CD14-positive monocyte (primary cell): ENCODE measurements at regions of chr20 and their contacts with region 1.

Region 1: GRCh38 chr20:59006864-59007664 is at the start of gene CTSZ:
- DNase-seq: peak; percentile 50 to 69 (median 60)
- H3K4me3 ChIP-seq: peak within 1 kb of the TSS; percentile 86 to 99 (median 90)
- H3K4me3 Mint-ChIP-seq: peak within 1 kb of the TSS; percentile 92 to 96
- H3K27ac ChIP-seq: peak within 1 kb of the TSS; percentile 98
- H3K27ac Mint-ChIP-seq: peak within 1 kb of the TSS; percentile 98 to 100 (median 99)
- H3K4me1 ChIP-seq: peaks cover 59 to 72% of the 10 kb centered on the region in 2 donors
- H3K4me1 Mint-ChIP-seq: peaks cover 61% of the 10 kb centered on the region
- H3K27me3 ChIP-seq: no peaks in the 10 kb centered on the region
- H3K27me3 Mint-ChIP-seq: peaks cover 0 to 6% (median 2%) of the 10 kb centered on the region in 3 donors
- CTCF ChIP-seq: no peak
- polyA plus RNA-seq, gene CTSZ: 62.6 to 755 (median 86.4) TPM

Region 2: GRCh38 chr20:58888521-58889333 is 118.3 kb before region 1 on chr20:
- intact Hi-C with region 1: loop called (anchors 5 to 10 kb)
- DNase-seq: peak; percentile 75 to 85 (median 76)
- H3K4me3 ChIP-seq: peak overlapping the region; percentile 77 to 94 (median 88)
- H3K4me3 Mint-ChIP-seq: peak overlapping the region; percentile 77 to 82
- H3K27ac ChIP-seq: peak overlapping the region in 1 of 2 donors; percentile 59
- H3K27ac Mint-ChIP-seq: peak overlapping the region in 4 of 7 donors; percentile 32 to 75 (median 58)
- H3K4me1 ChIP-seq: peaks cover 13 to 28% of the 10 kb centered on the region in 2 donors
- H3K4me1 Mint-ChIP-seq: peaks cover 15% of the 10 kb centered on the region
- H3K27me3 ChIP-seq: no peaks in the 10 kb centered on the region
- H3K27me3 Mint-ChIP-seq: peaks cover 2 to 7% (median 3%) of the 10 kb centered on the region in 3 donors
- CTCF ChIP-seq: no peak

Region 3: DNA sequence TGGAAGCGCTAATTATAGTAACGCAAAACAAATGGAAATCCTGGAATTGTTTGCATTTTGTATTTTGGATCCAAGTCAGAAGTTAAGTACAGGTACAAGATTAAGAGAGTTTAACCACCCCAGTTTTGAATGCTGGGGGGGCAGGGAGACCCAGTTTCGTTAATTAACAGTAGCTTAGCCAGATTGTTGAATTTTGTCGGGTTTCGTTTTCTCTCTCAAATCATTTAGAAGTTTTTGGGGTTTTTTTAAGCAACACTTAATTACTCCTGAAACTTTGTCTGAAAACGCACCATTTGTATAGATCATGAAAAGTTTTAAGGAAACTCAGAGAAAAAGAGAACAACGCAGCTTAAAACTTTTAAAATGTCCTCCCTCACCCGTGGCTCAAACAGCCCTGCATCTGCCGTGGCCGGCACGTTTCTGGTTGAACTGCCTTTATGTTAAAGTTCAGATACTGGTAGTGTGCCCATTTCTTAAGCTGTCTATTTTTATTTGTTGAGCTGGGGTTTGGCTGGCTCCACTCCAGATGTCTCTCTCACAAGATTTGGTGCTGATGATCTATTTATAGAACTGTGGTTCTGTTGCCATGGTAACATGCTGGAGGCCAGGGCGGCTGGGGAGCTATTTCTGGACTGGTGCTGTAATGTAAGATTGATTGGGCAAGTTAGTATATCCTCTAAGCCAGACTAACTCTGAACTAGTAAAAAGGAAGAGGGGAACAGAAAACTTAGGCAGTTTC is 99.5 kb before region 1 on chr20:
- intact Hi-C with region 1: loop called in 1 of 2 experiments (anchors 5 kb)
- DNase-seq: peak; percentile 90 to 97 (median 93)
- H3K4me3 ChIP-seq: peak overlapping the region; percentile 36 to 76 (median 65)
- H3K4me3 Mint-ChIP-seq: peak overlapping the region; percentile 88 to 96
- H3K27ac ChIP-seq: peak overlapping the region; percentile 89 to 91
- H3K27ac Mint-ChIP-seq: peak overlapping the region; percentile 96 to 100 (median 99)
- H3K4me1 ChIP-seq: peaks cover 28 to 32% of the 10 kb centered on the region in 2 donors
- H3K4me1 Mint-ChIP-seq: peaks cover 40% of the 10 kb centered on the region
- H3K27me3 ChIP-seq: no peaks in the 10 kb centered on the region
- H3K27me3 Mint-ChIP-seq: peaks cover 0 to 3% (median 0%) of the 10 kb centered on the region in 3 donors
- CTCF ChIP-seq: no peak

Region 4: DNA sequence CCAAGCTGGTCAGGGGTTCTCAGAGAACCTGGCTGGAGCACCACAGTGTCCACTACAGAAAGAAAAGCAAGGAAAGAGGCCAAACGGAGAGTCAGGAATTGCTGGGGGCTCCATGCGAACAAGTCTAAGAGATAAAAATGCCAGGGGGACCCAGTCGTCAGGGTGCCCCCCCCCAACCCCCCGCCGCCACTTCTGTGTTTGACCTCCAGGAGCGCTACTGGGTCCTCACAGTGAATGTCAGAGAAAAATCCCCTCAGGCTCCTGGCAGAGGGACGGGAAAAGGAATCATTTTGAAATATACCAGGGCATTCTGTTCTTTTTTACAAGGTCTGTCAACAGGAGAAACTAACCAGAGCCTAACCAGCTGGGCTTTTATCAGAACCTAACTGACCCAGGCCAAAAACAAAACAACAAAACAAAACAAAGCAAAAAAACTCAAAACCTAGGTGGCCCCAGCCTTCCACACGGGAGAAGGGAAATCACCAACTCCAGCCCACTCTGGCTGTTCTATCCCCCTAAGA is 43.9 kb before region 1 on chr20:
- intact Hi-C with region 1: no loop called
- DNase-seq: no peak
- H3K4me3 ChIP-seq: no peak overlapping the region
- H3K4me3 Mint-ChIP-seq: no peak overlapping the region
- H3K27ac ChIP-seq: no peak overlapping the region
- H3K27ac Mint-ChIP-seq: no peak overlapping the region
- H3K4me1 ChIP-seq: no peaks in the 10 kb centered on the region
- H3K4me1 Mint-ChIP-seq: peaks cover 5% of the 10 kb centered on the region
- H3K27me3 ChIP-seq: no peaks in the 10 kb centered on the region
- H3K27me3 Mint-ChIP-seq: peaks cover 7 to 19% (median 17%) of the 10 kb centered on the region in 3 donors
- CTCF ChIP-seq: no peak

Region 5: GRCh38 chr20:59032023-59032712 is 25.1 kb after region 1 on chr20 and contains the start of gene ATP5F1E:
- intact Hi-C with region 1: loop called (anchors 2 kb)
- DNase-seq: peak; percentile 94 to 95 (median 94)
- H3K4me3 ChIP-seq: peak within 1 kb of the TSS; percentile 53 to 83 (median 79)
- H3K4me3 Mint-ChIP-seq: peak within 1 kb of the TSS; percentile 94 to 97
- H3K27ac ChIP-seq: peak within 1 kb of the TSS; percentile 78 to 88
- H3K27ac Mint-ChIP-seq: peak within 1 kb of the TSS; percentile 94 to 99 (median 97)
- H3K4me1 ChIP-seq: peaks cover 23 to 41% of the 10 kb centered on the region in 2 donors
- H3K4me1 Mint-ChIP-seq: peaks cover 44% of the 10 kb centered on the region
- H3K27me3 ChIP-seq: no peaks in the 10 kb centered on the region
- H3K27me3 Mint-ChIP-seq: peaks cover 0 to 2% (median 0%) of the 10 kb centered on the region in 3 donors
- CTCF ChIP-seq: no peak
- polyA plus RNA-seq, gene ATP5F1E: 39.0 to 105 (median 102) TPM

Region 6: DNA sequence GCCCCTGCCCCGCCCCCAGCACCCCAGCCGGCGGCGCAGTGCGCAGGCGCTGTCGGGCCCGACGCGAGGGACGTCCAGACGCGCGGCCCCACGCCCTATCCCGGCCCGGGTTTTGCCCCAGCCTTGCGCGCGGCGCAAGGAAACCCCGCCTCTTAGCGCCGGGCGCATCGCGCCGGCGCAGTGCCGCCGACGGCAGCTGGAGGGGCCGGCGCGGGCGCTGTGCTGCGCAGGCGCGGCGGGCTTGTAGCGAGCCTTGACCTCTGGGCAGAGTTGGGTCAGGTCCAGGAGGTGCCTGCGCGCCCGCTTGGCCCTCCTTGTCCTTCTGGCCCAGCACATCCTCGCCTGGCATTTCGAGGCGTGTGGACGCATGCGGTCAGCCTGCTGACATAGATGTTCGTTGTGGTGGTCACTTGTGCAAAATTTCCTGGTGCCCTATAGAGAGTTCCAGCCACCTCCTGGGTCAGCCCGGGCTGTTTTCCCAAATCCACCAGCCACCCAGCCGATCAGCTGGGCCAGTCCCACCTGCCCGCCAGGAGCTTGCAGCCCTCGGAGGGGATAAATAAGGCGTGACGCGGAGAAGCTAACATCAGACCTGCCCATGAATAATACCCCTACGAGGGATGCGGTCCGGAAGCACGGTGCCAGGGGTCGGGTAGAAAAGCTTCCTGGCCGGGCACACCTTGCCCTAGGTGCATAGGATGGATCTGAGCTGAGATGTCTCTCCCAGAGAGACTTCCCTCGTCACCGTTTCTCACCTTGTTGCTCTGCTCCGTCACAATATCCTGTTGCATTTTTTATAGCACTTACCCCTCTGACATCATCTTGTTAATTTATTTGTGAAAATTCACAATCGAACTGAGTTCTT is 36.0 kb after region 1 on chr20:
- intact Hi-C with region 1: loop called in 1 of 2 experiments (anchors 2 kb)
- DNase-seq: peak; percentile 91 to 94 (median 91)
- H3K4me3 ChIP-seq: peak overlapping the region; percentile 76 to 92 (median 79)
- H3K4me3 Mint-ChIP-seq: peak overlapping the region; percentile 85 to 91
- H3K27ac ChIP-seq: peak overlapping the region; percentile 44 to 90
- H3K27ac Mint-ChIP-seq: peak overlapping the region; percentile 86 to 96 (median 92)
- H3K4me1 ChIP-seq: peaks cover 21 to 35% of the 10 kb centered on the region in 2 donors
- H3K4me1 Mint-ChIP-seq: peaks cover 40% of the 10 kb centered on the region
- H3K27me3 ChIP-seq: no peaks in the 10 kb centered on the region
- H3K27me3 Mint-ChIP-seq: peaks cover 0 to 2% (median 2%) of the 10 kb centered on the region in 3 donors
- CTCF ChIP-seq: no peak